B cell (primary cell): ENCODE measurements at regions of chr11 and their contacts with region 1.

Region 1: DNA sequence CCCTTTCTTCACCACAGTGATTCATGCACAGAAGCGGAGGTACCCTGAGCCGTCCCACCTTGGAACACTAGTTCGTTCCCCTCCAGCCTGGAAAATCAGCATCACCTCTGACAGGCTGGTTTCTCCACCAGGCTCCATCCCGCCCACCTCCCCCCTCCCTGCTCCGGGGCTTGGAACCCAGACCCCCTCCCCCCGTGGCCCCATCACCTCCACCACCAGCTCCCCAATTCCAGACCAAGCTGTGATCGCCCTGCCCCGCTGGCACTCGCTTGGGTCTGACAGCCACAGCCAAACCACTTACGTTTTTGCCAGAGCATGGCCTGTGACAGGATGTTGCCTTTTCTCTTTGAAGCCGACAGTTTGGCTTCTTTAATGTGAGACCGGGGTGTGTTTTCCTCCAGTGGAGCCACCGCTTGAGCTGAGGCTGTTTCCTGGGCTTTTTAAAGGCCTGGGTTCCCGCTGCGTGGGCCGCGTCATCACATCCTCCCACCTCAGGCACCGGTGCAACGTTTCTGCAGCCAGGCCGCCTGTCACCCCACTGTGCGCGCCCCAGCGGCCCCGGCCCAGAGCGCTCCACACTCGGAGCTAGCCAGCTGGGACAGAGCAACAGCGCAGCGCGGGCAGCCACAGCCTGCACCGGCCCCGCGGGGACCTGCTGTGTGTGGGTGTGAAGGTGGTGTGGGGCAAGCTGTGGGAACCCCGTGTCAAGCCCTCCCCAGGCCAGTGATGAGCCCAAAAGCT is at the start of gene POU2AF1:
- DNase-seq: peak; percentile 93
- ATAC-seq: peak; percentile 73
- H3K4me3 ChIP-seq: peak within 1 kb of the TSS; percentile 66 to 91 (median 89)
- H3K4me3 Mint-ChIP-seq: peak within 1 kb of the TSS; percentile 100
- H3K27ac ChIP-seq: peak within 1 kb of the TSS; percentile 96 to 97
- H3K27ac Mint-ChIP-seq: peak within 1 kb of the TSS; percentile 100
- H3K4me1 ChIP-seq: peaks cover 71 to 72% of the 10 kb centered on the region in 2 donors
- H3K4me1 Mint-ChIP-seq: peaks cover 72% of the 10 kb centered on the region
- H3K27me3 ChIP-seq: no peaks in the 10 kb centered on the region
- H3K27me3 Mint-ChIP-seq: no peaks in the 10 kb centered on the region
- CTCF ChIP-seq: no peak
- total RNA-seq, gene POU2AF1: 404 and 407 TPM in 2 replicates

Region 2: GRCh38 chr11:110711776-110712658 is 667.0 kb before region 1 on chr11 and contains the start of gene ARHGAP20:
- CTCF ChIA-PET with region 1: no interaction called
- POLR2A ChIA-PET with region 1: no interaction called
- intact Hi-C with region 1: loop called (anchors 5 kb)
- DNase-seq: peak; percentile 79
- ATAC-seq: peak; percentile 93
- H3K4me3 ChIP-seq: peak within 1 kb of the TSS; percentile 26 to 86 (median 74)
- H3K4me3 Mint-ChIP-seq: peak within 1 kb of the TSS; percentile 89
- H3K27ac ChIP-seq: peak within 1 kb of the TSS in 1 of 2 donors; percentile 13
- H3K27ac Mint-ChIP-seq: peak within 1 kb of the TSS; percentile 54
- H3K4me1 ChIP-seq: peaks cover 17 to 23% of the 10 kb centered on the region in 2 donors
- H3K4me1 Mint-ChIP-seq: peaks cover 17% of the 10 kb centered on the region
- H3K27me3 ChIP-seq: peaks cover 0 to 41% (median 23%) of the 10 kb centered on the region in 4 experiments
- H3K27me3 Mint-ChIP-seq: peaks cover 47% of the 10 kb centered on the region
- CTCF ChIP-seq: no peak
- total RNA-seq, gene ARHGAP20: 0.58 and 0.91 TPM in 2 replicates

Region 3: GRCh38 chr11:111283945-111284481 is 95.0 kb before region 1 on chr11:
- CTCF ChIA-PET with region 1: interaction called, 34 read pairs
- POLR2A ChIA-PET with region 1: interaction called, 3 read pairs
- intact Hi-C with region 1: loop called (anchors 5 kb)
- DNase-seq: peak; percentile 37
- ATAC-seq: peak; percentile 63
- H3K4me3 ChIP-seq: peak overlapping the region in 1 of 5 experiments; percentile 9
- H3K4me3 Mint-ChIP-seq: peak overlapping the region; percentile 49
- H3K27ac ChIP-seq: no peak overlapping the region
- H3K27ac Mint-ChIP-seq: no peak overlapping the region
- H3K4me1 ChIP-seq: peaks cover 12 to 16% of the 10 kb centered on the region in 2 donors
- H3K4me1 Mint-ChIP-seq: peaks cover 12% of the 10 kb centered on the region
- H3K27me3 ChIP-seq: no peaks in the 10 kb centered on the region
- H3K27me3 Mint-ChIP-seq: no peaks in the 10 kb centered on the region
- CTCF ChIP-seq: no peak

Region 4: GRCh38 chr11:111367411-111368284 is 11.4 kb before region 1 on chr11:
- CTCF ChIA-PET with region 1: interaction called, 17 read pairs
- POLR2A ChIA-PET with region 1: interaction called, 53 read pairs
- intact Hi-C with region 1: loop called (anchors 1 kb)
- DNase-seq: peak; percentile 60
- ATAC-seq: peak; percentile 44
- H3K4me3 ChIP-seq: peak overlapping the region in 4 of 5 experiments; percentile 3 to 27 (median 12)
- H3K4me3 Mint-ChIP-seq: peak overlapping the region; percentile 86
- H3K27ac ChIP-seq: peak overlapping the region; percentile 72 to 88
- H3K27ac Mint-ChIP-seq: peak overlapping the region; percentile 94
- H3K4me1 ChIP-seq: peaks cover 99 to 100% of the 10 kb centered on the region in 2 donors
- H3K4me1 Mint-ChIP-seq: peaks cover 99% of the 10 kb centered on the region
- H3K27me3 ChIP-seq: no peaks in the 10 kb centered on the region
- H3K27me3 Mint-ChIP-seq: no peaks in the 10 kb centered on the region
- CTCF ChIP-seq: no peak

Region 5: GRCh38 chr11:111399187-111400031 is 20.4 kb after region 1 on chr11:
- CTCF ChIA-PET with region 1: interaction called, 22 read pairs
- POLR2A ChIA-PET with region 1: interaction called, 54 read pairs
- intact Hi-C with region 1: loop called (anchors 1 kb)
- DNase-seq: peak; percentile 52
- ATAC-seq: peak; percentile 55
- H3K4me3 ChIP-seq: peak overlapping the region in 4 of 5 experiments; percentile 0 to 45 (median 34)
- H3K4me3 Mint-ChIP-seq: peak overlapping the region; percentile 88
- H3K27ac ChIP-seq: peak overlapping the region; percentile 72 to 86
- H3K27ac Mint-ChIP-seq: peak overlapping the region; percentile 93
- H3K4me1 ChIP-seq: peaks cover 57 to 58% of the 10 kb centered on the region in 2 donors
- H3K4me1 Mint-ChIP-seq: peaks cover 73% of the 10 kb centered on the region
- H3K27me3 ChIP-seq: no peaks in the 10 kb centered on the region
- H3K27me3 Mint-ChIP-seq: no peaks in the 10 kb centered on the region
- CTCF ChIP-seq: no peak

Region 6: GRCh38 chr11:111446404-111447111 is 67.5 kb after region 1 on chr11:
- CTCF ChIA-PET with region 1: interaction called, 13 read pairs
- POLR2A ChIA-PET with region 1: interaction called, 3 read pairs
- intact Hi-C with region 1: no loop called
- DNase-seq: peak; percentile 94
- ATAC-seq: peak; percentile 98
- H3K4me3 ChIP-seq: no peak overlapping the region
- H3K4me3 Mint-ChIP-seq: peak overlapping the region; percentile 1
- H3K27ac ChIP-seq: no peak overlapping the region
- H3K27ac Mint-ChIP-seq: peak overlapping the region; percentile 28
- H3K4me1 ChIP-seq: peaks cover 31 to 35% of the 10 kb centered on the region in 2 donors
- H3K4me1 Mint-ChIP-seq: peaks cover 37% of the 10 kb centered on the region
- H3K27me3 ChIP-seq: no peaks in the 10 kb centered on the region
- H3K27me3 Mint-ChIP-seq: peaks cover under 1% of the 10 kb centered on the region
- CTCF ChIP-seq: peak; percentile 74

Region 7: GRCh38 chr11:111766093-111766833 is 387.2 kb after region 1 on chr11 and contains the start of gene PPP2R1B:
- CTCF ChIA-PET with region 1: no interaction called
- POLR2A ChIA-PET with region 1: no interaction called
- intact Hi-C with region 1: loop called (anchors 5 kb)
- DNase-seq: peak; percentile 88
- ATAC-seq: peak; percentile 97
- H3K4me3 ChIP-seq: peak within 1 kb of the TSS; percentile 74 to 97 (median 90)
- H3K4me3 Mint-ChIP-seq: peak within 1 kb of the TSS; percentile 100
- H3K27ac ChIP-seq: peak within 1 kb of the TSS; percentile 53 to 77
- H3K27ac Mint-ChIP-seq: peak within 1 kb of the TSS; percentile 97
- H3K4me1 ChIP-seq: peaks cover 9 to 16% of the 10 kb centered on the region in 2 donors
- H3K4me1 Mint-ChIP-seq: peaks cover 37% of the 10 kb centered on the region
- H3K27me3 ChIP-seq: no peaks in the 10 kb centered on the region
- H3K27me3 Mint-ChIP-seq: no peaks in the 10 kb centered on the region
- CTCF ChIP-seq: no peak
- total RNA-seq, gene PPP2R1B: 35.6 and 37.0 TPM in 2 replicates